Astrocyte of the cerebellum (primary cell): ENCODE measurements at regions of chr6 and their contacts with region 1.

Region 1: GRCh38 chr6:12449447-12449846 is 159.3 kb downstream of the EDN1 start:
- DNase-seq: no peak
- H3K4me3 ChIP-seq: no peak overlapping the region
- CTCF ChIP-seq: no peak

Region 2: DNA sequence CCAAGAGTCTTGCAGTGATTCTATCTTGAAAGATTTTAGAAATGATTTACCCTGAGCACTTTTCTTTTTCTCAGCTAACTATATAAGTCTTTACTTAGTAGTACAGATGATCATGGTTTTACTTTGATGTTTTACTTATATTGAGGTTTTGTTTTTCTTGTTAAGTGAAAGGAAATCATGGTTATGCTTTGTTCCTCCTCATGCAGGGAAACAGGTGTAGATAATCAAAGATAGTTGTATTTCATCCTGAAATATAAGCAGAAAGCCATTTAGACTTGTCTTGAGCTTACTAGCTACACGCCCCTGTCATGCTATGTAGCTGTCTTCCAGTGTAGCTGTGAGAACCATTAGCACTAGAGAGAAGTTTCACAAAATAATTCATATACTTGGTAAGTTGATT is 323.4 kb before region 1 on chr6:
- in situ Hi-C with region 1: no loop called
- DNase-seq: no peak
- H3K4me3 ChIP-seq: no peak overlapping the region
- CTCF ChIP-seq: no peak

Region 3: DNA sequence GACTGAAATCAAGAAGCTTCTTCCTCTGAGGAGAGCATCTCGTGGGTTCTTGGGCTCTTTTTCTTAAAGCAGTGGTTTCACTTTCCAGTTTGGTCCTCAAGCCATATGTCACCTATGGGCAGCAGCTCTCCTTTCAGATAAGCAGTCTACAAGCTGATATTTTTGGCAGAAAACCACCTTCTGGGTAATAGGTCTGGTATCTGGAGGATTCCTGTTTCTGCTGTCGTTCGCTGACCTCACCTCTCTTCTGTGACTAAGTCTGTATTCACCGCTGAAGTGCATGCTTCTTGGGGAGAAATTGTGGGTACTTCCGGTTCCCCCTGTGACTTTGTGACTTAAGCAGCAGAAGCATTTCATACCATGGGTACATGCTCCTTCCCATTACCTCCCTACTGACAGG is 34.3 kb after region 1 on chr6:
- in situ Hi-C with region 1: loop called (anchors 5 kb)
- DNase-seq: peak; percentile 66
- H3K4me3 ChIP-seq: no peak overlapping the region
- CTCF ChIP-seq: no peak

Region 4: GRCh38 chr6:12504319-12504966 is 55.0 kb after region 1 on chr6:
- in situ Hi-C with region 1: no loop called
- DNase-seq: no peak
- H3K4me3 ChIP-seq: no peak overlapping the region
- CTCF ChIP-seq: peak; percentile 39